ENCODE measurements at regions of chr3 and their contacts with region 1.

Region 1: GRCh38 chr3:185937689-185938463 is at the start of gene TRA2B:
- DNase-seq: peak; percentile 100
- H3K4me3 ChIP-seq: peak within 1 kb of the TSS; percentile 72 to 100 (median 98)
- H3K27ac ChIP-seq: peak within 1 kb of the TSS; percentile 94 to 100 (median 100)
- H3K4me1 ChIP-seq: peaks cover 0 to 35% (median 28%) of the 10 kb centered on the region in 4 donors
- H3K27me3 ChIP-seq: no peaks in the 10 kb centered on the region
- CTCF ChIP-seq: peak in 2 of 4 experiments; percentile 21 to 24
- EP300 ChIP-seq: peak in 2 of 4 donors; percentile 39 to 91
- POLR2A ChIP-seq: peak; percentile 100
- total RNA-seq, gene TRA2B: 113 to 159 (median 123) TPM

Region 2: GRCh38 chr3:185460719-185461350 is 477.0 kb before region 1 on chr3:
- intact Hi-C with region 1: no loop called
- DNase-seq: no peak
- H3K4me3 ChIP-seq: no peak overlapping the region
- H3K27ac ChIP-seq: no peak overlapping the region
- H3K4me1 ChIP-seq: no peaks in the 10 kb centered on the region
- H3K27me3 ChIP-seq: no peaks in the 10 kb centered on the region
- CTCF ChIP-seq: no peak
- EP300 ChIP-seq: no peak
- POLR2A ChIP-seq: no peak

Region 3: DNA sequence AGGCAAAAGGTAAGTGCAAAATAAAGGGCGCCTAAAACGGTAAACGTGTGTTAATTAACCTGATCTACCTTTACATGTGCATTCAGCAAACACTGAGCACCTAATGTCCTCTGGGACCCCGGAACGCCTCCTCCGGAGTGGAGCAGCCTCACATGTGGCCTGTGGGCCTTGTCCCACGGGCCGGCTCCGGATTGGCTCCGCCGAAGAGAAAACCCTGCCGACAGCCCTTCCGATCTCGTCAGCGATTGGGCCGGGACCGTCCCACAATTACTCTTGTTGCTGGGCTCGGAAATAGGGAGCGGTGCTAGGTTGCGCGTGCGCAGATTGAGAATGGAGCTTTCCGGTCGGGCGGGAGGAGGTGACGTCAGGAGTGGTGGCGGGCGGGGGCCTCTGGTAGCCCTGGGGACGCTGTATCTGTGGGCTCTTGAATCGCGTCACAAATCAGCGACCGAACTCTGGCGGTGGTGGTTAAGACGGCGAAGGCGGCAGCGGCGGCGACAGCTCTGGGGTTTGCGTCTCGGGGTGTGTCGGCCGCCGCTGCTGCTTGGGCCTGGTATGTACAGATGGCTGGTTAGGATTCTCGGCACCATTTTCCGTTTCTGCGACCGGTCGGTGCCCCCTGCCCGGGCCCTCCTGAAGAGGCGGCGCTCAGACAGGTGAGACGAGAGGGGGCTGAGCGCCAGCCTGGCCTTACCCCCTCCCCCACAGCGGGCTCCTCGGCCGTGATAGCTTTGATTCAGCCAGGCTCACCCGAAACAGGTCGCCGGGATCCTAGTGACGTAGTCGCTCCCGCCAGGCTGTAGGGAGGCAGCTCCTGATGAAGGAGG is 351.8 kb before region 1 on chr3 and contains the start of gene SENP2:
- intact Hi-C with region 1: loop called (anchors 10 kb)
- DNase-seq: peak; percentile 99
- H3K4me3 ChIP-seq: peak within 1 kb of the TSS; percentile 80 to 85 (median 82)
- H3K27ac ChIP-seq: peak within 1 kb of the TSS; percentile 94 to 96 (median 96)
- H3K4me1 ChIP-seq: peaks cover 0 to 36% (median 26%) of the 10 kb centered on the region in 4 donors
- H3K27me3 ChIP-seq: no peaks in the 10 kb centered on the region
- CTCF ChIP-seq: no peak
- EP300 ChIP-seq: no peak
- POLR2A ChIP-seq: peak; percentile 83 to 86
- total RNA-seq, gene SENP2: 24.8 to 28.5 (median 26.7) TPM

Region 4: DNA sequence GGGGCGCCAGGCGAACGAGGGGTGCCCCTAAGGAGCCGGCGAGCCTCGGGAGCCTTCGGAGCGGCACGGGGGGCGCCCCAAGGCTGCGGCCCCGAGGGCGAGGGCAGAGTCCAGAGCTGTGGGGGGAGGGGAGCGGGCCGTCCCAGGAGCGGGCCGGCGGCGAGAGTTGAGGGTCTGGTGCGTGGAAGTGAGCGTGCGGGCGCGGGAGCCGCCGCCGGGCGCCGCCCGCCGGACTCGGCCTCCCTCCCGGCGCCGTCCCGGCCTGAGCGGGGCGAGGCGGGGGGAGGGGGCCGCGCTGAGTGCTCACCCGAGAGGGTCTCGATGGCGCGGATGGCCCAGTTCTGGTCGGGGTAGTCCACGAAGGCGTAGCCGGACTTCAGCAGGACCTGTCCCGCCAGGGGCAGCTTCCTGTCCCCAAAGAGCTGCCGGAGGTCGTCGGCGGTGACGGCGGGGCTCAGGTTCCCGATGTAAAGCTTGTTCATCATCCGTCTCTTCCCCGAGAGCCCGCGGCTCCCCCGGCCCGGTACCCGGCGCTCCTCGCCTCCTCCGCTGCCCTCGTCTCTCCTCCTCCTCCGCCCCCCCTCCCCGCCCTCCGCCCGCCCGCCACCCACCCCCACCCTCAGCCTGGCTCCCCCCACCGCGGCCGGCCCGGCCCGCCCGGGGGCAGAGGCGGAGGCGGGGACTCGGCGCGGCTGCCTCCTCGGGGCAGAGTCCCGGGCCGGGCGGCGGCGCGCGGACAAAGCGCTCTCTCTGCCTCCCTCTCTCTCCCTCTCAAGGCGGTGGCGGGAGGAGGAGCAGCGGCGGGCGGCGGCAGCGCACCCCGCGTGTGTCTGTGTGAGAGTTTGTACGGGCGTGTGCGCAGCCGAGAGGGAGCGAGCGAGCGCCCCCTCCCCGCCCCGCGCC is 113.1 kb before region 1 on chr3 and contains the start of gene IGF2BP2:
- intact Hi-C with region 1: loop called (anchors 5 kb)
- DNase-seq: peak; percentile 77
- H3K4me3 ChIP-seq: peak within 1 kb of the TSS; percentile 40 to 66 (median 59)
- H3K27ac ChIP-seq: peak within 1 kb of the TSS; percentile 67 to 85 (median 78)
- H3K4me1 ChIP-seq: peaks cover 0 to 39% (median 32%) of the 10 kb centered on the region in 4 donors
- H3K27me3 ChIP-seq: peaks cover 35 to 71% (median 57%) of the 10 kb centered on the region in 3 donors
- CTCF ChIP-seq: no peak
- EP300 ChIP-seq: no peak
- POLR2A ChIP-seq: no peak
- total RNA-seq, gene IGF2BP2: 6.3 to 14.7 (median 7.1) TPM

Region 5: GRCh38 chr3:185968168-185968567 is 30.3 kb after region 1 on chr3:
- intact Hi-C with region 1: no loop called
- DNase-seq: no peak
- H3K4me3 ChIP-seq: no peak overlapping the region
- H3K27ac ChIP-seq: no peak overlapping the region
- H3K4me1 ChIP-seq: no peaks in the 10 kb centered on the region
- H3K27me3 ChIP-seq: no peaks in the 10 kb centered on the region
- CTCF ChIP-seq: no peak
- EP300 ChIP-seq: no peak
- POLR2A ChIP-seq: no peak

Region 6: DNA sequence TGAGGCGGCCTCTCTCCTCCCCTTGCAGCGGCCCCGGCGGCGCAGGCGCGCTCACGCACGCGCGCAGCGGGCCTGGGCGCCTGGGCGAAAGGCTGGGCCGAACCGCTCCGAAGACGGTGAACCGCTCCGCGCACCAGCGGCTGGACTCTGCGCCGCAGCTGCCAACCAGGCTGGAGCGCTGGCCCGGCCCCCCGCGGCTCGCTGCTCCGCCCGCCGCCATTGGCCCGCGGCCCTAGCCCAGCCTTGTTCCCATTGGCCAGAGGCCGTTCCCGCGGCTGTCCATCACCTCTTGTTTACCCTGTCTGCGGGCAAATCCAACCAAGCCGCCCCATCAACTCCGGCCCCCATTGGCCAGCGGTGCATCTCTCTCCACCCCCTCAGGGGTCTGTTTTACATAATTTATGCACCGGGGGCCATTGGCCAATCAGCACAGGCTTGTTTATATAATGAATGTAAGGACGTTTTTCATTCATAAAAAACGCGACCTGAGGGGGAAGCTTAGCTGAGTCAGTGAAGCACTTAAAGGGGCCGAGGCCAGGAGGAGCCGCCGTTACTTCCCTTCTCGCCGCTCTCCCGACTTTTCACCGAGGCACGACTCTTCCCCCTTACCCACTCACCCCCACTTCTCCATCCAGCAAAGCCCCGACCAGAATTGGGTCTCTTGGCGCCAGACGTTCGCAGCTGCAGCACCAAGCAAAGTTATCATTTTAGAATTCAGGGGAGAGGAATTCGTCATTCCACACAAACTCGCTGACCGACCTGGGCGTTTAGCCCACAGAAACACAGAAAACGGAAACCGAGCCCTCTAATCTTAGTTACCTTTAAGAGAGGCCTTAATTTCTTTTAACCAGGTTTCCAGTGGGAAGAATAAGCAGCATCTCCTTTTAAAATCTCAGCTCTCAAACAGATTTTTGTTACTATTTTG is 171.3 kb after region 1 on chr3 and contains the start of gene ETV5:
- intact Hi-C with region 1: loop called (anchors 2 kb)
- DNase-seq: peak; percentile 100
- H3K4me3 ChIP-seq: peak within 1 kb of the TSS; percentile 54 to 70 (median 64)
- H3K27ac ChIP-seq: peak within 1 kb of the TSS; percentile 77 to 87 (median 83)
- H3K4me1 ChIP-seq: peaks cover 0 to 41% (median 34%) of the 10 kb centered on the region in 4 donors
- H3K27me3 ChIP-seq: peaks cover 0 to 47% (median 30%) of the 10 kb centered on the region in 3 donors
- CTCF ChIP-seq: peak in 1 of 4 experiments; percentile 1
- EP300 ChIP-seq: no peak
- POLR2A ChIP-seq: peak; percentile 29 to 31
- total RNA-seq, gene ETV5: 5.8 to 7.8 (median 6.9) TPM

Region 7: GRCh38 chr3:186121968-186122367 is 184.1 kb after region 1 on chr3:
- intact Hi-C with region 1: no loop called
- DNase-seq: no peak
- H3K4me3 ChIP-seq: no peak overlapping the region
- H3K27ac ChIP-seq: no peak overlapping the region
- H3K4me1 ChIP-seq: no peaks in the 10 kb centered on the region
- H3K27me3 ChIP-seq: no peaks in the 10 kb centered on the region
- CTCF ChIP-seq: no peak
- EP300 ChIP-seq: no peak
- POLR2A ChIP-seq: no peak

Region 8: DNA sequence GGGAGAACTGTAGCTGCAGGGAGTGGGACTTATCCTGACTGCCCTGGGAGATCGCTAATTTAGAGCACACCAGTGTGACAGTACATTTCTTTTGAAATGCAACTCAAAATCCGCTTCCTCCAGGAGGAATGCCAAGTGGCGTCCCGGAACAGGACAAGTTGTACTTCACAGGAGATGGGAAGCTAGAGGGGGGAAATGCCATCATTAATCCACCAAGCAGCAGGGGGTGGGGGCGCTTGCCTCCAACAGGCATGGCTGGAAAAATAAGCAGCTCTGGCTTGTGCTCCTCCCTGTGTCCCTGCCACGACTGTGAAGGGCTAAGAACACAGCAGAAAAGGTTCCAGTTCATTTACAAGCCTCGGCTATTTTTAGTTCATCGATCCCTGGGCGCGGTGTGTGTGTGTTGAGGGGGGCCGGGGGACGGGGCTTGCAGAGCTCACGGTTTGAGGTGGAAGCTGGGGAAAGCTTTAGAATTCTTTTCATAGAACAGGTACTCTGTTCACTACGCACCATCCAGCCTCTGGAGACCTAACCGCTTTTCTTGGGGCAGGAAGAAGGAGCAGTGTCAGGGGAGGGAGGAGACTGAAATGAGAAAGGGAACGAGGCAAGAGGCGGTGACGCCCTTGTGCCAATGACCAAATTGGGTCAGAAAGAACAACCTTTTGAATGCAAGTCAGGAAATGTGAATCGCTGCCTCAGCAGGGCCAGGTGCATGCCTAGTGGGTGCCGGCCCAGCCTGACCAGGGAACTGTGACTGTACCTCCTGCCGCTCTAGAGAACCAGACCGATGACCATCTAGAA is 475.9 kb after region 1 on chr3:
- intact Hi-C with region 1: loop called (anchors 10 kb)
- DNase-seq: peak; percentile 94
- H3K4me3 ChIP-seq: peak overlapping the region; percentile 15 to 44 (median 43)
- H3K27ac ChIP-seq: peak overlapping the region; percentile 75 to 82 (median 80)
- H3K4me1 ChIP-seq: peaks cover 0 to 36% (median 32%) of the 10 kb centered on the region in 4 donors
- H3K27me3 ChIP-seq: no peaks in the 10 kb centered on the region
- CTCF ChIP-seq: no peak
- EP300 ChIP-seq: peak; percentile 63 to 91 (median 73)
- POLR2A ChIP-seq: peak in 1 of 2 donors; percentile 14

Region 9: DNA sequence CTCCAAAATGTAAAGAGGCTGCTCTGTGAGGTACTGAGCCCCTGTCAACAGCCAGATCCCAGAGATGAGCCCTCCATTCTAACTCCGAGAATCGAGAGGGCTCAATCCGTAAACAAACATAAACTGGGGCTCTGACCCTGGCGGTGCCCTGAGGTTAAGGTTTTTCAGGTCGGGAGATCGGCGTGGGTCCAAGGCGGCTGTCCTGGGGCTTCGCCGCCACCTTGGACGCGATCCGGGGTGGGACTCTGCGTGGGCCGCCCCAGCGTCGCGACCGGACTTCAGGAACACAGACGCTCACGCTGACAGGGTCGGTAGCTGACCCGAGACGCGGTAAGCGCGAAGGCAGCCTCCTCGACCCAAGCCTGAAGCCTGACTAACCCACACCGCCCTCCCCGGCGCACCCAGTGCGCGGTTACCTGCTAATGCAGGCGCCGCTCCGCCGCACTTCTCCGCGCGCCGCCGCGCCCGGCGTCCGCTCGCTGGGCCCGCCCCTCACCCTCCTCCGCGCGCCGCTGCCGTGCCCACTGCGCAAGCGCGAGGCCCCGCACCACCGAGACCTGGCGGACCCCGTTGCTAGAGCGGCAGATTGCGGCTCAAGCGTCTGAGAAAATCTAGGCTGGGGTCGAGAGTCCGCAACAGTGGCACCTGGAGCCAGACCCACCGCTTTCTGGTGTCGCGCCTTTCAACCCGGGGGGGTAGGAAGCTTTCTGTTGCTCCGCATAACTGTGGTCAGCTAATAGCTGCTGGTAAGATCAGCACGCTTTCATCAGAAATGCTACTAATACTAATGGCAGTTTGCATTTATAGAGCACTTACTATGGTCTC is 629.2 kb after region 1 on chr3 and contains the start of gene TBCCD1:
- intact Hi-C with region 1: loop called (anchors 5 kb)
- DNase-seq: peak; percentile 94
- H3K4me3 ChIP-seq: peak within 1 kb of the TSS; percentile 72 to 85 (median 74)
- H3K27ac ChIP-seq: peak within 1 kb of the TSS; percentile 86 to 89 (median 88)
- H3K4me1 ChIP-seq: peaks cover 0 to 57% (median 40%) of the 10 kb centered on the region in 4 donors
- H3K27me3 ChIP-seq: no peaks in the 10 kb centered on the region
- CTCF ChIP-seq: no peak
- EP300 ChIP-seq: no peak
- POLR2A ChIP-seq: peak; percentile 72 to 74
- total RNA-seq, gene TBCCD1: 9.7 to 14.3 (median 11.4) TPM

Region 10: DNA sequence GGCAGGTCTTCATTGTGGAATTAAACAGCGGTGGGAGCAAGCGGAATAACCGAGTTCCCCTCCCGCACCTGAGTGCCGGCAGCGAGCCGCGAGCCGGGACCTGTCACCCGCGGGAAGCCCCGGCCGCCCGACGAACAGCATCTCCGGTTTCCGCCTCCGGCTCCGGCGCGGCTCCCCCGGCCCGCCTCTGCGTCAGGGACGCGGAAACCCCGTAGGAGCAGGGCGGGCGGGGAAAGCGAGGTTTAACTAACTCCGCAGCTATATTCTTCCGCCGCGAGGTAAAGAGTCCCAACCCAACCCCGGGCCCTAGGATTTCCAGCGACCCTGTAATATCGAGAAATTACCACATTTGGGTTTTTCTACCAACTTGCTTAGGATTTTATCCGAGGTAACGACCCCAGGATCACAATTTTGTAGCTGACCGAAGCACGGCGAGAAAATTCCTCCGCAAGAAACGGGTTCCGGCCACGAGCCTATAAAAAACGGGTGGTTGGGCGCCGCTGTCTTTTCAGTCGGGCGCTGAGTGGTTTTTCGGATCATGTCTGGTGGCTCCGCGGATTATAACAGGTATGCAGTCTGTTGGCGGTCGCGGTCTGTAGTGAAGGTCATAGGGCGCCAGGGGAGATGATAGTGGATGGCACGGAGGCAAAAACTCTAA is 845.3 kb after region 1 on chr3 and contains the start of gene EIF4A2:
- intact Hi-C with region 1: loop called (anchors 5 kb)
- DNase-seq: peak; percentile 95
- H3K4me3 ChIP-seq: peak within 1 kb of the TSS; percentile 76 to 94 (median 86)
- H3K27ac ChIP-seq: peak within 1 kb of the TSS; percentile 94 to 99 (median 97)
- H3K4me1 ChIP-seq: peaks cover 0 to 47% (median 39%) of the 10 kb centered on the region in 4 donors
- H3K27me3 ChIP-seq: no peaks in the 10 kb centered on the region
- CTCF ChIP-seq: no peak
- EP300 ChIP-seq: peak in 2 of 4 donors; percentile 8 to 27
- POLR2A ChIP-seq: peak; percentile 90 to 98
- total RNA-seq, gene EIF4A2: 632 to 1,010 (median 767) TPM